ENCODE measurements at regions of chr4 and their contacts with region 1.

Region 1: GRCh38 chr4:56435306-56435926 is at the start of gene PPAT:
- DNase-seq: peak; percentile 92 to 98
- H3K4me3 ChIP-seq: peak within 1 kb of the TSS; percentile 70 to 86
- H3K27ac ChIP-seq: peak within 1 kb of the TSS; percentile 84 to 88
- H3K4me1 ChIP-seq: peaks cover 0 to 7% of the 10 kb centered on the region in 2 donors
- H3K27me3 ChIP-seq: no peaks in the 10 kb centered on the region
- CTCF ChIP-seq: peak in 1 of 3 experiments; percentile 35
- total RNA-seq, gene PPAT: 3.6 TPM

Region 2: GRCh38 chr4:56387023-56388001 is 48.1 kb before region 1 on chr4 and contains the start of gene AASDH:
- intact Hi-C with region 1: loop called (anchors 1 kb)
- DNase-seq: peak; percentile 59 to 95
- H3K4me3 ChIP-seq: peak within 1 kb of the TSS; percentile 77 to 86
- H3K27ac ChIP-seq: peak within 1 kb of the TSS; percentile 94 to 96
- H3K4me1 ChIP-seq: peaks cover 0 to 5% of the 10 kb centered on the region in 2 donors
- H3K27me3 ChIP-seq: no peaks in the 10 kb centered on the region
- CTCF ChIP-seq: no peak
- total RNA-seq, gene AASDH: 4.0 TPM

Region 3: GRCh38 chr4:56467284-56468096 is 32.1 kb after region 1 on chr4 and contains the start of gene SRP72:
- intact Hi-C with region 1: loop called (anchors 1 kb)
- DNase-seq: peak; percentile 66 to 94
- H3K4me3 ChIP-seq: peak within 1 kb of the TSS; percentile 93 to 96
- H3K27ac ChIP-seq: peak within 1 kb of the TSS; percentile 84 to 93
- H3K4me1 ChIP-seq: peaks cover 8 to 22% of the 10 kb centered on the region in 2 donors
- H3K27me3 ChIP-seq: no peaks in the 10 kb centered on the region
- CTCF ChIP-seq: no peak
- total RNA-seq, gene SRP72: 89.4 TPM

Region 4: GRCh38 chr4:56544573-56545131 is 109.2 kb after region 1 on chr4:
- intact Hi-C with region 1: loop called (anchors 1 kb)
- DNase-seq: peak; percentile 14 to 89
- H3K4me3 ChIP-seq: peak overlapping the region; percentile 7 to 60
- H3K27ac ChIP-seq: no peak overlapping the region
- H3K4me1 ChIP-seq: no peaks in the 10 kb centered on the region
- H3K27me3 ChIP-seq: no peaks in the 10 kb centered on the region
- CTCF ChIP-seq: peak; percentile 84 to 99 (median 98)

Region 5: DNA sequence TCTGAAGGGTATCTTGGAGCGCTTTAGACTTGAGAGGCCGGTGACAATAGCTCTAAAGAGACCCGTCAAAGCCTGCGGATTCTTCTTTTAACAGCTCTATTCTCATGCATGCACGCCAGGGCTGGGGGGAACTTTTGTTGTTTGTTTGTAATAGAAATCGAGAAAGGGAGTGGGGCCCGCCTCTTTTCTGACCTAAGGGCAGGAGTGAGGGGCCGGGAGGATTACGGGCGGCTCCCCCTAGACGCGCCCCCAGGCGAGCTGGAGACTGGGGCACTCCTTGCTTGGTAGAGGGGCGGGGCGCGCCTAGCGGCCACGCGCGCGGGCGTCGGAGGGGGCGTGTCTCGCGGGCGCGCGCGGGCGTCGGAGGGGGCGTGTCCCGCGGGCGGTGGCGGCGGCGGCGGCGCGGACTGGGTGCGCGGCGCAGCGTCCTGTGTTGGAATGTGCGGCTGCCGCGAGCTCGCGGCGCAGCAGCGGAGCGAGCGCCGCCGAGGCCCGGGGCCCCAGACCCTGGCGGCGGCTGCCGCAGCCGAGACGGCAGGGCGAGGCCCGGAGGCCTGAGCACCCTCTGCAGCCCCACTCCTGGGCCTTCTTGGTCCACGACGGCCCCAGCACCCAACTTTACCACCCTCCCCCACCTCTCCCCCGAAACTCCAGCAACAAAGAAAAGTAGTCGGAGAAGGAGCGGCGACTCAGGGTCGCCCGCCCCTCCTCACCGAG is 472.2 kb after region 1 on chr4 and contains the start of gene REST:
- intact Hi-C with region 1: loop called (anchors 5 kb)
- DNase-seq: peak in 1 of 2 donors; percentile 88
- H3K4me3 ChIP-seq: peak within 1 kb of the TSS; percentile 92 to 94
- H3K27ac ChIP-seq: peak within 1 kb of the TSS; percentile 81 to 88
- H3K4me1 ChIP-seq: peaks cover 0 to 12% of the 10 kb centered on the region in 2 donors
- H3K27me3 ChIP-seq: no peaks in the 10 kb centered on the region
- CTCF ChIP-seq: no peak
- total RNA-seq, gene REST: 86.5 TPM

Measured in ascending aorta (tissue), 2 donors.